CD4-positive, alpha-beta memory T cell (primary cell): ENCODE measurements at regions of chr5 and their contacts with region 1.

Region 1: DNA sequence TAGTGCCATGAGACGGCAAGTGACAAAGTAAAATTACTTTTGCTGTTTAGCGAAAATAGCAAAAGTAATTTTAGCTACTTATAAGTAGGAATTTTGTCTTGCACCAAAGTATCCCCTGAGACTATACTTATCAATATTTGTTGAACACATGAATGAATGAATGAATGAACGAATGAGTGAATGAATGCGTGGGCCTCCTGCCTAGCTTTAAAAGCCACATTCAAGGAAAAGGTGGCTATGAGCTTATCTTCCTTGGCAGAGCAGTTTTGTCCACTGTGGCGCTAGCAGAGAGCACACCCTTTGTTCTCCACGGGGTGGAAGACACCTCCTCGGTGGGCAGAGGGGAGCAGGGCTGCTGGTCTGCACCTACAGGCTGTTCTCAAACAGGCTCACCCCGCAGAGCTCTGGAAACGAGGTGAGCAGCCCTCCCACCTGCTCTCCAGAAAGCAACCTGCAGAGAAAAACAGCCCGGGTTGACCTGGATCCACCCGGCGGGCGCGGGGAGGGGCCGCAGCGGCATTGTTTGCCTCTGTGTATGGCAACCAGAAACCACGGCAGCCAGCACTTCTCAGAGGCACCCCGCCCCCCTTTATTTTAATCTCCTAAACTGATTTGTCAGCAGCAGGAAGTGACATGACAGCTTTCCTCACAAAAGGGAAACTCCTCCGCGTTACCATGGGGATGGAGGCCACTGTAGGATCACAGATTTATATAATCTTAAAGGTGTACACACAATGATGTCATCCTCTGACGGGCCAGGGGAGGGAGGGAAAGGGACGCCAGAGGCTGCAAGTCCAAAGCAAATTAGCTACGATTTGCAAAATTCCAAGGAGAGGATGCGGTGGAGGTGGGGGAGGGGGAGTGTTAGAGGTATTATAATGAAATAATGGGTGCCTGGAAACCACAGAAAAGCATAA is 5.9 kb downstream of the DUSP1 start:
- DNase-seq: peak; percentile 98 to 100 (median 99)
- H3K4me3 ChIP-seq: peak overlapping the region in 1 of 2 donors; percentile 52
- H3K4me3 Mint-ChIP-seq: peak overlapping the region; percentile 77 to 90 (median 84)
- H3K27ac ChIP-seq: peak overlapping the region; percentile 100
- H3K27ac Mint-ChIP-seq: peak overlapping the region; percentile 95 to 100 (median 99)
- H3K4me1 ChIP-seq: peaks cover 55% of the 10 kb centered on the region
- H3K4me1 Mint-ChIP-seq: peaks cover 46 to 70% (median 58%) of the 10 kb centered on the region in 4 donors
- H3K27me3 ChIP-seq: no peaks in the 10 kb centered on the region
- H3K27me3 Mint-ChIP-seq: peaks cover 0 to 1% of the 10 kb centered on the region in 2 donors

Region 2: GRCh38 chr5:172283020-172283861 is 481.9 kb before region 1 on chr5 and contains the start of gene UBTD2:
- CTCF ChIA-PET with region 1: no interaction called
- POLR2A ChIA-PET with region 1: no interaction called
- intact Hi-C with region 1: loop called (anchors 5 kb)
- DNase-seq: peak; percentile 72 to 82 (median 76)
- H3K4me3 ChIP-seq: peak within 1 kb of the TSS; percentile 47 to 71
- H3K4me3 Mint-ChIP-seq: peak within 1 kb of the TSS; percentile 89 to 93 (median 91)
- H3K27ac ChIP-seq: peak within 1 kb of the TSS; percentile 62
- H3K27ac Mint-ChIP-seq: peak within 1 kb of the TSS; percentile 80 to 96 (median 87)
- H3K4me1 ChIP-seq: peaks cover 26% of the 10 kb centered on the region
- H3K4me1 Mint-ChIP-seq: peaks cover 14 to 34% (median 21%) of the 10 kb centered on the region in 4 donors
- H3K27me3 ChIP-seq: no peaks in the 10 kb centered on the region
- H3K27me3 Mint-ChIP-seq: no peaks in the 10 kb centered on the region
- total RNA-seq, gene UBTD2: 6.3 TPM

Region 3: DNA sequence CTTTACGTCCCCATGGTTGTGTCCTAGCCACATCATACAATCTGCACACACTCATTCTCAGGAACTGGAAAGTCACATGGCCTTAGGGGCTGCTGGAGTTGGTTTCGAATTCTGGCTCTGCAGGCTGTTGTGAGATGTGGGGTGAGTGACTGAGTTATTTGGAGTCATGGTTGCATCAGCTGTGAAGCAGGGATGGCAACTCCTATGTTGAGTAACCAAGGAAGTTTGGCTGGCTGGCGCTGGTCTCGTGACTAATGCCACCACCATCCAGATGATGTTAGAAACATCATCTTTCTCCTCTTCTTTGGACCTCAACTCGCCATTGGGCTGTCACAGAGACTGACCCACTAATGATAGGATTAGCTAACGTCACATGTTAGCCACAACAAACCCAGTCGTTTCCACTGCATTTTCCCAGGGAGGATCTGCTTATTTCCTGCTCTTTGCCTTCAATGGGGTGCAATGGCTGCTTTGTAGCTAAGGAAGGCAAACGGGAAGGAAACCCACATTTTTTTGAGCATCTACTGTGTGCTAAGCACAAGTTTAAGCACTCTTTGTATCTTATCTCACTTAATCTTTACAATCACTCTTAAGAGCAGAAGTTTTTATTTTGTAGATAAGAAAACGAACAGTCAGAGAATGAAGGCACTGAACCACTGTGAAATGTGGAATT is 403.4 kb before region 1 on chr5:
- CTCF ChIA-PET with region 1: no interaction called
- POLR2A ChIA-PET with region 1: no interaction called
- intact Hi-C with region 1: no loop called
- DNase-seq: no peak
- H3K4me3 ChIP-seq: no peak overlapping the region
- H3K4me3 Mint-ChIP-seq: no peak overlapping the region
- H3K27ac ChIP-seq: no peak overlapping the region
- H3K27ac Mint-ChIP-seq: no peak overlapping the region
- H3K4me1 ChIP-seq: no peaks in the 10 kb centered on the region
- H3K4me1 Mint-ChIP-seq: peaks cover 0 to 1% (median 0%) of the 10 kb centered on the region in 4 donors
- H3K27me3 ChIP-seq: no peaks in the 10 kb centered on the region
- H3K27me3 Mint-ChIP-seq: peaks cover 0 to 5% of the 10 kb centered on the region in 2 donors

Region 4: DNA sequence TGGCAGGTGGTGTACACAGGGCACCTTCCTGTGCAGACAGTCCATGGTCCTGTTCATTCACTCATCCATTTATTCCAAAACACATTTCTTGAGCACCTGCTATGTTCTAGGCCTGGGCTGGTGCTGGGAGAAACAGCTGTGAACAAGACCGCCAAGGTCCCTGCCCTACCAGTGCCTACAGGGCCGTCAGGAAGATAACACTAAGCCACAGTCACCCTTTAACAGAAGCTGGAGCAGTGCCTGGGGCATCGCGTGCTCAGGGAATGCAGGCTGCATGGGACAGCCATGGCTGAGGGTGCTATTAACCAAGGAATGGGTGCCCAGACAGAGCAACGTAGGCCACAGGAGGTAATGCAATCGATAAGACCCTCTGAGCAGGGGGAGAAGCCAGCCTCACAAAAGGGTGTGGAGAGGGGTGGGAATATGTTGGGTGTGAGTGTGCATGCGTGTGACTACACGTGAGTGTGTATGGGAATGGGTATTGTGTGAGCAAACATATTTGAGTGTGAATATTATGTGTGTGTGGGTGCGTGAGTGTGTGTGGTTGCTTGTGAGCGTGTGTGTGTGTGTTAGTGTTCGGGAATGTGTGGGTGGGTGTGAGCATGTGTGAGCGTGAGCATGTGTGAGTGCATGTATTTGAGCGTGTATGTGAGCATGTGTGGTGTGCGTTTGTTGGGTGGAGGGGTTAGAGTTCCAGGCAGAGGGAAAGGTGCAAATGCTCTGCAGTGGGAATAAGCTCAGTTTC is 13.2 kb before region 1 on chr5:
- CTCF ChIA-PET with region 1: interaction called, 10 read pairs
- POLR2A ChIA-PET with region 1: interaction called, 56 read pairs
- intact Hi-C with region 1: no loop called
- DNase-seq: no peak
- H3K4me3 ChIP-seq: no peak overlapping the region
- H3K4me3 Mint-ChIP-seq: peak overlapping the region in 1 of 8 donors; percentile 4
- H3K27ac ChIP-seq: no peak overlapping the region
- H3K27ac Mint-ChIP-seq: peak overlapping the region in 2 of 7 donors; percentile 20 to 70
- H3K4me1 ChIP-seq: no peaks in the 10 kb centered on the region
- H3K4me1 Mint-ChIP-seq: no peaks in the 10 kb centered on the region
- H3K27me3 ChIP-seq: no peaks in the 10 kb centered on the region
- H3K27me3 Mint-ChIP-seq: peaks cover 0 to 1% of the 10 kb centered on the region in 2 donors

Region 5: GRCh38 chr5:172806897-172807672 is 42.0 kb after region 1 on chr5:
- CTCF ChIA-PET with region 1: no interaction called
- POLR2A ChIA-PET with region 1: interaction called, 60 read pairs
- intact Hi-C with region 1: loop called (anchors 1 kb)
- DNase-seq: peak; percentile 72 to 88 (median 78)
- H3K4me3 ChIP-seq: peak overlapping the region in 1 of 2 donors; percentile 21
- H3K4me3 Mint-ChIP-seq: peak overlapping the region; percentile 75 to 91 (median 82)
- H3K27ac ChIP-seq: peak overlapping the region; percentile 52
- H3K27ac Mint-ChIP-seq: peak overlapping the region; percentile 79 to 98 (median 95)
- H3K4me1 ChIP-seq: peaks cover 11% of the 10 kb centered on the region
- H3K4me1 Mint-ChIP-seq: peaks cover 9 to 16% (median 14%) of the 10 kb centered on the region in 4 donors
- H3K27me3 ChIP-seq: no peaks in the 10 kb centered on the region
- H3K27me3 Mint-ChIP-seq: peaks cover 0 to 1% of the 10 kb centered on the region in 2 donors

Region 6: DNA sequence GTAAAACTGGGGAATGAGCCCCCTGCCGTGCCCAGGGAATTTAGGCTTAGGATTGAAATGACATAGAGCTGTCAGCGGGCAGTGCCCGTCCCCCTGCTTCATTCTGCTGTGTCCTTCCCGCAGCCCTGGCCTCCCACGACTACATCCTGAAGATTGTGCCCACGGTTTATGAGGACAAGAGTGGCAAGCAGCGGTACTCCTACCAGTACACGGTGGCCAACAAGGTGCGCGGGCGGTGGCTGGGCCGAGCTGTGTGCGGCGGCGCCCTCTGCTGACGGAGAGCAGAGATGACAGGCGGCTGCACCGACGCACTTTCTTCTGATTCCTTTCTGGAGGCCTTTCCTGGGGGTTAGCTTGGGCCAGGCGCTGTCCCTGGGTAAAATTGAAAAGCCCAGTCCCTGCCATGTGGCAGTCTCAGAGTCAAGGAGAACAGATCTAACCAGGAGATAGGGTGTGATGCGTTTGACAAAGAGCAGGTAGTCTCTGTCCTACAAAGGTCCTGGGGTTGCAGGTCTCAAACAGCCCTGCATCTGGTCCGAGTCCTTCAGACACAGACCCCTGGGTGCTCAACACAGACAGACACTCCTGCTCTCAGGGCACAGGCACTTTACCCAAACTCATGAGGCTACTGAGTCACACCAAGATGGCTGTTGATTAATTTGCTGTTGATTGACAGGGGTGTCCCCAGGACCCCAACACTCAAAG is 167.4 kb after region 1 on chr5:
- CTCF ChIA-PET with region 1: interaction called, 63 read pairs
- POLR2A ChIA-PET with region 1: interaction called, 44 read pairs
- intact Hi-C with region 1: no loop called
- DNase-seq: peak; percentile 64 to 74 (median 70)
- H3K4me3 ChIP-seq: no peak overlapping the region
- H3K4me3 Mint-ChIP-seq: no peak overlapping the region
- H3K27ac ChIP-seq: no peak overlapping the region
- H3K27ac Mint-ChIP-seq: peak overlapping the region in 5 of 7 donors; percentile 54 to 80 (median 66)
- H3K4me1 ChIP-seq: peaks cover 4% of the 10 kb centered on the region
- H3K4me1 Mint-ChIP-seq: peaks cover 6 to 8% (median 6%) of the 10 kb centered on the region in 4 donors
- H3K27me3 ChIP-seq: no peaks in the 10 kb centered on the region
- H3K27me3 Mint-ChIP-seq: no peaks in the 10 kb centered on the region

Region 7: GRCh38 chr5:172973127-172973916 is 208.2 kb after region 1 on chr5:
- CTCF ChIA-PET with region 1: no interaction called
- POLR2A ChIA-PET with region 1: no interaction called
- intact Hi-C with region 1: no loop called
- DNase-seq: no peak
- H3K4me3 ChIP-seq: no peak overlapping the region
- H3K4me3 Mint-ChIP-seq: no peak overlapping the region
- H3K27ac ChIP-seq: no peak overlapping the region
- H3K27ac Mint-ChIP-seq: no peak overlapping the region
- H3K4me1 ChIP-seq: no peaks in the 10 kb centered on the region
- H3K4me1 Mint-ChIP-seq: no peaks in the 10 kb centered on the region
- H3K27me3 ChIP-seq: no peaks in the 10 kb centered on the region
- H3K27me3 Mint-ChIP-seq: peaks cover 0 to 2% of the 10 kb centered on the region in 2 donors

Region 8: DNA sequence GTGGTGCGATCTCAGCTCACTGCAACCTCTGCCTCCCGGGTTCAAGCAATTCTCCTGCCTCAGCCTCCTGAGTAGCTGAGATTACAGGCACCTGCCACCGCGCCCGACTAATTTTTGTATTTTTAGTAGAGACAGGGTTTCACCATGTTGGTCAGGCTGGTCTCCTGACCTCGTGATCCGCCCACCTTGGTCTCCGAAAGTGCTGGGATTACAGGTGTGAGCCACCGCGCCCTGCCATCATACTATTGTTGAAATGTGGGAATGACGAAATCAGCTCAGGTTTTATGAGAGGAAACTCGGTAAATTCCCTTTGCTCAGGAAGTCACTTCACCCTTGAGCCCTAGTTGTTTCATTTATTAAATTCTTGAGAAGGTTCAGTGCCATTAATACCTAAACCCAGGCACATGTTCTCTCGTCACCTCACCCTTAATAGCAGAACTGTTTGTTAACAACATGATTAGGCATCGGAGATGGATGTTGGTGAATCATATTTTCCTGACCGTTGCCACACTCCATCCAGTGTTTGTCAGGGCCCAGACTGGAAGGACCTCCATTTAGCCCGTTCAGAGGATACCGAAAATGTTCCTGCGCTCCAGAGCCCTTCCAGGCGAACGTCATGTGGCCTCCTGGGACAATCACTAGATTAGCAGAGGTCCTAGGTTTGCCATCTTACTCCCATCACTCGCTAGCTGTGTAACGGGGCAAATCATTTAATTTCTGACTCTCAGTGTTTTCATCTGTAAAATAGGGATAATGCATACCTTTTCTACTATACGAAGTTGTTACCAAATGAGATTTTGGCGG is 271.0 kb after region 1 on chr5:
- CTCF ChIA-PET with region 1: no interaction called
- POLR2A ChIA-PET with region 1: no interaction called
- intact Hi-C with region 1: no loop called
- DNase-seq: peak in 1 of 5 donors; percentile 40
- H3K4me3 ChIP-seq: peak overlapping the region; percentile 44 to 47
- H3K4me3 Mint-ChIP-seq: peak overlapping the region; percentile 80 to 95 (median 86)
- H3K27ac ChIP-seq: peak overlapping the region; percentile 71
- H3K27ac Mint-ChIP-seq: peak overlapping the region; percentile 90 to 97 (median 95)
- H3K4me1 ChIP-seq: peaks cover 46% of the 10 kb centered on the region
- H3K4me1 Mint-ChIP-seq: peaks cover 39 to 64% (median 54%) of the 10 kb centered on the region in 4 donors
- H3K27me3 ChIP-seq: no peaks in the 10 kb centered on the region
- H3K27me3 Mint-ChIP-seq: no peaks in the 10 kb centered on the region

Region 9: GRCh38 chr5:173057062-173057924 is 292.2 kb after region 1 on chr5:
- CTCF ChIA-PET with region 1: no interaction called
- POLR2A ChIA-PET with region 1: interaction called, 6 read pairs
- intact Hi-C with region 1: loop called (anchors 1 kb)
- DNase-seq: peak; percentile 97 to 99 (median 98)
- H3K4me3 ChIP-seq: peak overlapping the region; percentile 68 to 71
- H3K4me3 Mint-ChIP-seq: peak overlapping the region; percentile 92 to 98 (median 95)
- H3K27ac ChIP-seq: peak overlapping the region; percentile 95
- H3K27ac Mint-ChIP-seq: peak overlapping the region; percentile 90 to 96 (median 96)
- H3K4me1 ChIP-seq: peaks cover 50% of the 10 kb centered on the region
- H3K4me1 Mint-ChIP-seq: peaks cover 26 to 68% (median 47%) of the 10 kb centered on the region in 4 donors
- H3K27me3 ChIP-seq: no peaks in the 10 kb centered on the region
- H3K27me3 Mint-ChIP-seq: no peaks in the 10 kb centered on the region